ENCODE measurements at regions of chr10 and their contacts with region 1.

Region 1: GRCh38 chr10:25026463-25026862 is 10.1 kb downstream of the THNSL1 start:
- DNase-seq: no peak
- H3K4me3 ChIP-seq: no peak overlapping the region
- H3K27ac ChIP-seq: no peak overlapping the region
- H3K4me1 ChIP-seq: peaks cover 0 to 3% of the 10 kb centered on the region in 2 donors
- H3K27me3 ChIP-seq: no peaks in the 10 kb centered on the region
- CTCF ChIP-seq: peak in 4 of 6 experiments; percentile 18 to 53 (median 36)
- POLR2A ChIP-seq: no peak

Region 2: GRCh38 chr10:24574578-24575155 is 451.8 kb before region 1 on chr10:
- intact Hi-C with region 1: no loop called
- DNase-seq: no peak
- H3K4me3 ChIP-seq: no peak overlapping the region
- H3K27ac ChIP-seq: no peak overlapping the region
- H3K4me1 ChIP-seq: no peaks in the 10 kb centered on the region
- H3K27me3 ChIP-seq: no peaks in the 10 kb centered on the region
- CTCF ChIP-seq: no peak
- POLR2A ChIP-seq: no peak

Region 3: DNA sequence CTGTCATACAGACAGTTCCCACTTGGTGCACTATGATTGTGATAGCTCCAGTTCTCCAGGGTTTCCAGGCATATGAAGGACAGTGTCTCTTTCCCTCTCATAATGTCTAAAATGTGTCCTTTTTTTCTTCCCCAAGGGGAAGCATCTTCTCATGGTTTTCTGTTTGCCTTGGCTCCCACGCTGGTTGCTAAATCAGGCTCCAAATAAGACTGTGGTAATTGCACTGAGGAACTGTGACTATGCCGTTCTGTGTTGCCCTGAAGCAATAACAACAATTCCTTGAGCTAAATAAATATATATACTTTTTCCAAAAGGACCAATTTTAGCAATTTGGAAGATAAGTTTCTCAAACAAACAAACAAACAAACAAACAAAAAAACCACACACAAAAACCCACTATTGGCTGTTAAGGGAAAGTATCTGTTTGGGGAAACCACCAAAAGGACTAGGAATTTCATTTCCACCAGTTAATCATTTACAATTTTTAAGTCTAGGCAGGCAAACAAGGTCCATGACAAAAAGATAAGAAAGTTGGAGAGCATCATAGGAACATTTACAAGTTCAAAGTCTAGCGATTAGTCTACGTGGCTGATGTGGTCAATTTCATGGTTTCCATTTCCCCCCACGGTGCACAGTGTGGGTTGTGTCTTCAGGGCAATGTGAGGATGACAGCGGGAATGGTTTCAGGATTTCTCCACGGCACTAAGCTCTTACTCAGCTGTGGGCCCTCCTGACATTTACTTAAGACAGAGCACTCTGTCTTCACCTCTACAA is 52.4 kb after region 1 on chr10:
- intact Hi-C with region 1: loop called (anchors 10 kb)
- DNase-seq: no peak
- H3K4me3 ChIP-seq: no peak overlapping the region
- H3K27ac ChIP-seq: no peak overlapping the region
- H3K4me1 ChIP-seq: peaks cover 26 to 35% of the 10 kb centered on the region in 2 donors
- H3K27me3 ChIP-seq: no peaks in the 10 kb centered on the region
- CTCF ChIP-seq: no peak
- POLR2A ChIP-seq: no peak

Region 4: GRCh38 chr10:25101461-25102146 is 75.1 kb after region 1 on chr10:
- intact Hi-C with region 1: no loop called
- DNase-seq: no peak
- H3K4me3 ChIP-seq: no peak overlapping the region
- H3K27ac ChIP-seq: no peak overlapping the region
- H3K4me1 ChIP-seq: no peaks in the 10 kb centered on the region
- H3K27me3 ChIP-seq: no peaks in the 10 kb centered on the region
- CTCF ChIP-seq: no peak
- POLR2A ChIP-seq: no peak

Measured in thyroid gland (tissue), 4 donors.